Ovary (tissue), 10 donors: ENCODE measurements at regions of chr9 and their contacts with region 1.

Region 1: GRCh38 chr9:124964604-124965003 is 23.7 kb upstream of the GOLGA1 start:
- DNase-seq: no peak
- H3K4me3 ChIP-seq: no peak overlapping the region
- H3K27ac ChIP-seq: no peak overlapping the region
- H3K4me1 ChIP-seq: no peaks in the 10 kb centered on the region
- H3K27me3 ChIP-seq: no peaks in the 10 kb centered on the region
- CTCF ChIP-seq: no peak
- EP300 ChIP-seq: no peak
- POLR2A ChIP-seq: no peak

Region 2: DNA sequence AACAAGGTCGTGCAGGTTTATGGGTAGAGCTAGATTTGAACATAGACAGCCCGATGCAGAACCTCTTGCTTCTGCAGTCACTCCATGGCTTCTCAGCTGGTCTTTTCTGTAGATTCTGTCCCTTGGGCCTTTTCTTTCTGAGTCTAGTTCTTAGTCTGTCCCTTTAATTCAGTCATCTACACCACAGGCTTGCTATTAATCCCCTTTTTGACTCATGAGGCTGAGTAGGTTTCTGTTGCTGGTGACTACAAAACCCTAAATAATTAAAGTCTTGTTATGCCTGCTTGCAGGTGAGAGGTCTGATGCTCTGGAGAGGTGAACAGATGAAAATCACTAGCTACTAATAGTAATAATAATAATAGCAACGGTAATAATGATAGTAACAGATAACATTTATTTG is 1677.0 kb before region 1 on chr9:
- intact Hi-C with region 1: loop called in 1 of 4 experiments (anchors 5 kb)
- DNase-seq: no peak
- H3K4me3 ChIP-seq: no peak overlapping the region
- H3K27ac ChIP-seq: no peak overlapping the region
- H3K4me1 ChIP-seq: no peaks in the 10 kb centered on the region
- H3K27me3 ChIP-seq: no peaks in the 10 kb centered on the region
- CTCF ChIP-seq: no peak
- EP300 ChIP-seq: no peak
- POLR2A ChIP-seq: no peak